ENCODE measurements at regions of chr2 and their contacts with region 1.

Region 1: DNA sequence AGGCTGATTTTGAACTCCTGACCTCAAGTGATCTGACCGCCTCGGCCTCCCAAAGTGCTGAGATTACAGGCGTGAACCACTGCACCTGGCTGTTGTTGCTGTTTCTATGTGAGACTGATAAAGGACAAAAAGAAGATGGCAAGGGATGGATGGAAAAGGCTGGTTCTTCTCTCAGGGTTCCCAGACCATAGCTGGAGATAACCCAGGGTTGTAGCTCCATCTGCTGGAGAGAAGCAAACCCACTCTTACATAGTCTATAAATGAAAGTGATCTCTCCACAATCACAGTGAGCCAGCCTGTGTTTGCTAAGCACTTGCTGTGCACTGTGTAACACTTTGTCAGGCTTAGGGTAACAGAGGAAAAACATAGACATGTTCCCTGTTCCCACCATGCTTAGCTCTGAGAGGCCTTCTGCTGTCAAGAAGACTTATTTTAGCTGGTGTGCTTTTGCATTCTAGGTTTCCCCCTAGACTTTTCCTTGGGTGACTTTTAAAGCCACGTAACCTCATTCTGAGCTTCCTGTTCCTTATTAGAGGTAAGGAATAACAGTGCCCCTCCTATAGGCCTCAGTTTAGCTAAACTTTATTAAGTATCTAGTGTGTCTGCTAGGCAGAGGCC is 49.7 kb downstream of the LIMS1 start:
- DNase-seq: peak; percentile 72
- ATAC-seq: peak; percentile 88
- H3K4me3 Mint-ChIP-seq: no peak overlapping the region
- H3K27ac Mint-ChIP-seq: no peak overlapping the region
- H3K4me1 Mint-ChIP-seq: peaks cover 41% of the 10 kb centered on the region
- H3K27me3 Mint-ChIP-seq: no peaks in the 10 kb centered on the region

Region 2: GRCh38 chr2:108492364-108492763 is 91.6 kb before region 1 on chr2:
- CTCF ChIA-PET with region 1: no interaction called
- DNase-seq: no peak
- ATAC-seq: no peak
- H3K4me3 Mint-ChIP-seq: no peak overlapping the region
- H3K27ac Mint-ChIP-seq: no peak overlapping the region
- H3K4me1 Mint-ChIP-seq: peaks cover 4% of the 10 kb centered on the region
- H3K27me3 Mint-ChIP-seq: no peaks in the 10 kb centered on the region

Region 3: DNA sequence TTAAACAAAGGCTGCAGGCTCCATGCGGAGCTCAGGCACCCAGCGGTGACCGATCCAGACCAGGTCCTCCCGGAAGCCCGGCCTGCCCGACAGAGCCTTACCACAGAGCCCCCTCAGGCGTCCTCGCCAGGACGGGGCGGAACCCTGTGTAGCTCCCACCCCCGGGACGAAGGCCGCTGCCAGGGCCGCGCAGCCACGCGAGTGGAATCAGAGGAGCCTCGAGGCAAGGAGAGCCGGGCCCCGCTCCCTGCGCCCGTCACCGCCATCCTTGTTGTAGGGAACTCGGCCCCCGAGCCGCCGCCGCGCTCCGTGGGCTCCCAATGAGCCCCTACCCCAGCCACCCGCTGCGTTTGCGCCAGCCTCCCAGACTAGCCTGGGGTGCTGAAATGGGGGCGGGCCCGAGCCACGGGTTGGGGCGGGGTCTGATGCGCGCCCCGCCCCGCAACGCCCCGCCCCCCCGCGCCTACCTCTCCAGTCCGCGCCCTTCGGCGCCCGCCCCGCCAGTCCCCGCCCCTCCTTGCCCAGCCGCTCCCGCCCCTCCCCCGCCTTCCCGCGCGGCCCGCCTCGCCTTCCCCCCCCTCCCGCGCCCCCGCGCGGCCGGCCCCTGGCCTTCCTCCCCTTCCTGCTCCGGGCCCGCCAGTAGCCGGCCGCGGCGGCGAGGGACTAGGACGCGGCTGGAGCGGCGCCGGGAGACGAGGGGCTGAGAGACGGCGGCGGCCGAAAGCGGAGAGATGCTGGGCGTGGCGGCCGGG is 50.0 kb before region 1 on chr2 and contains the start of gene LIMS1:
- CTCF ChIA-PET with region 1: interaction called, 12 read pairs
- DNase-seq: peak; percentile 90
- ATAC-seq: peak; percentile 91
- H3K4me3 Mint-ChIP-seq: peak within 1 kb of the TSS; percentile 94
- H3K27ac Mint-ChIP-seq: peak within 1 kb of the TSS; percentile 96
- H3K4me1 Mint-ChIP-seq: peaks cover 52% of the 10 kb centered on the region
- H3K27me3 Mint-ChIP-seq: no peaks in the 10 kb centered on the region
- total RNA-seq, gene LIMS1: 57.2 to 58.2 TPM

Region 4: DNA sequence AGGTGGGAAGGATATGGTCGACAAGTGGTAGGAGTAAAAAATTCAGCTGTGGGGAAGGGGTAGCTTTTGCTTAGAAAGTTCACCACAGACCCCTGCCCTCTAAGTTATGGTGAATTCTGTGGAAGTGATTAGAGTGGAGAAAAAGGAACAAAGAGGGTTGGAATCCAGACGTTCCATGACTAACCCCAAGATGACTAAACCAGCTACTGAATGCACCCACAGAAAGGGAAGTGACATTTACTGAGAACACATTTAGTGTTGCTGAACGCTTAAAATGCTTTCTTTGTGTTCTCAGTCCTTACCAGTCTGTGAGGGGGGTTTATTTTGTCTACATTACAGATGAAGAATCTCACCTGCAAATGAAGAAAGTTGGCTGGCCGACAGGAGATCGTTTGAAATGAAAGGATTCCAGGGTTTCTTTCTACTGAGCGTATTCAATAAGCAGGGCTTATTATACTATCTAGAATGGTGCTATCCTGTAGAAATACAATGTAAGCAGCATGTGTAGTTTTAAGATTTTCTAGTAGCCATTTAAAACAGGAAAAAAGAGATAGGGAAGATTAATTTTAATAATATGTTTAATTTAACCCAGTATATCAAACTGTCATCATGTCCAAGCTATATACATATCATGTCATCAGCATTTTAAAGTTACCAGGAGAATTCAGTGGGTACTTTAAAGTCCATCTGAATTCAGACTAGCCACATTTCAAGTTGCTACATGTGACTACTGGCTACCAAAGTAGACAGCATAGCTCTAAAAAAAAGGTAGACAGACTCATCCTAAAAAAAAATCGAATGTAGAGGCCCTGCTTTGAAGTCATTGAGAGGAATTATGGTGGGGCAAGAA is 10.3 kb after region 1 on chr2:
- CTCF ChIA-PET with region 1: interaction called, 15 read pairs
- DNase-seq: peak; percentile 51
- ATAC-seq: peak; percentile 87
- H3K4me3 Mint-ChIP-seq: peak overlapping the region; percentile 50
- H3K27ac Mint-ChIP-seq: peak overlapping the region; percentile 75
- H3K4me1 Mint-ChIP-seq: peaks cover 47% of the 10 kb centered on the region
- H3K27me3 Mint-ChIP-seq: no peaks in the 10 kb centered on the region